ENCODE measurements at regions of chr11 and their contacts with region 1.

Region 1: DNA sequence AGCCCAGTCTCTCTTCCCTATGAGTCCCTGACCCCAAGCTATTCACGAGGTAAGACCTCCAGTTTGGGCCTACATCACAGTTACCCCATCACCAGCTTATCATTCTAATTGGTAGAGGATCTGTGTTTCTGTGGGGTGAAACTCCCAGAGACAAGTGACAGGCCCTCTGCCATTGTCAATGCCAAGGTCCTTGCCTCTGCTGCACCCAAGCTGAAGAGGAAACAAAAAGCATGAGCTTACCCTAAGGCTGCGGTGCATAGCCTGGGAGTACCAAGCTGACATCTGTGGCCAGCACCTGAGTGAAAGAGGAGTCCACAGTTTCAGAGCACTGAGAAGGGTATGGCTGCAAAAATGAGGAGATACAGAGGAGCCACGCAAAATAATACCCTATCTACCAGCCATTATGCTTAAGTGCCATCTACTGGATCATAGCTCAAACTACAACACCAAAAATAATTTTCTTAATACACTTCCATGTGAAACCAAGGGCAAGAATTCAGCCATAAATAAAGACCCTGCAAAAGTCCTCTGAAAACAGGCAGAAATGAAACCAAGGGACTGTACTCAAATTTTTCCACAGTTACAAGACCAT is 62.3 kb upstream of the ANO5 start:
- DNase-seq: no peak
- ATAC-seq: peak; percentile 88
- H3K4me3 Mint-ChIP-seq: no peak overlapping the region
- H3K27ac Mint-ChIP-seq: no peak overlapping the region
- H3K4me1 Mint-ChIP-seq: no peaks in the 10 kb centered on the region; the same call in 1 of the 2 replicates
- H3K27me3 Mint-ChIP-seq: peaks cover 8% of the 10 kb centered on the region
- CTCF ChIP-seq: peak; percentile 15; the same call in 1 of the 2 replicates

Region 2: DNA sequence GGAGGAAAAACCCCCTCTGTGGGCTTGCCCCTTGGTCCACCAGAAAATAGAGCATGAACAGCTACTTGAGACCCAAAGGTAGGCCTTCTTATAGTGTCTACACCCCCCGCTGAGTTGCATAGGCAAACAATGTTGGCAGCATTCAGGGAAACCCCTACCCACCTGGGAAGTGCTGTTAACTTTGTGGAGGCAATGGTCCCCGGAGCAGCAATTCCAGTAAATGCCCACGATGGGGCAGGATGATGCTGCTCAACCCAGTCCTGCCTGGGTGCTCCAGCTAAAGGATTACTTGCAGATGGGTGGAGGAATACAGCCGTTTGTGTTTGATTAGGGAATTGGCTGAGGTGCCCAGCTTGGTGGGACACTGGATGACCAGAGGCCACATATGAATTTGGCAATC is 319.0 kb before region 1 on chr11:
- CTCF ChIA-PET with region 1: interaction called, 10 read pairs
- POLR2A ChIA-PET with region 1: no interaction called
- DNase-seq: peak; percentile 59
- ATAC-seq: peak; percentile 97
- H3K4me3 Mint-ChIP-seq: no peak overlapping the region
- H3K27ac Mint-ChIP-seq: no peak overlapping the region
- H3K4me1 Mint-ChIP-seq: peaks cover 18% of the 10 kb centered on the region
- H3K27me3 Mint-ChIP-seq: no peaks in the 10 kb centered on the region
- CTCF ChIP-seq: 0 out of 2 replicates have a peak, but pooled peaks have one; percentile 20

Region 3: DNA sequence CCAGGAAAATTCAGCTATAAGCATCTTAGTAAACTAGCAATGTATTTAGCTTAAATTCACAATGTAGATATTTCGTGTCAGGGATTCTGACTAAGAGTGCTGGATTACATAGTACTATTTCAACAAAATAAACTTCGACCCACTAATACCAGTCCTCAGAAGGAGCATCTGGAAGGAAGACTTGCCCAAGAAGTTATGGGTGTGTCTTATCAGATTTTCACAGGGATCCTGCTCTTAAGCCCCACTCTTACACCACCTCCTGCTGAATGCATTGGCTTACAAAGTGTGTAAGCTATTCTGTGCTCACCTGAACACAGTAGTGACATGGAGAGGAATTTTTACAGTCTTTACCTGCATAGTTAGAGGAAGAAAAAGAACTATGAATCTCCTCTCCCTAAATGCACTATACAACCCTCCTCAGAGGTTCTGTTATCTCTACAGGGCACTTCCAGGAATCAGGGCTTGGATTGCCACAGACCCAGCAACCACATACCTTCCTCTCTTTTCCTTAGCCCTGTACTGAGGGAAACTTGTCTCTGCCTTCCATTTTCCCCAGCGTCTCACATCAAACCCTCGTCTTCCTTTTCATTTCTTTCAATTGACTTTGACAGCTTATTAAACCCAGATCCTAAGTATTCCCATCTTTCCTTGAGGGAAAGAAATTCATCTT is 27.1 kb after region 1 on chr11:
- CTCF ChIA-PET with region 1: interaction called, 11 read pairs
- POLR2A ChIA-PET with region 1: no interaction called
- DNase-seq: no peak
- ATAC-seq: no peak; the same call in 1 of the 2 replicates
- H3K4me3 Mint-ChIP-seq: no peak overlapping the region
- H3K27ac Mint-ChIP-seq: no peak overlapping the region
- H3K4me1 Mint-ChIP-seq: no peaks in the 10 kb centered on the region
- H3K27me3 Mint-ChIP-seq: peaks cover 2% of the 10 kb centered on the region; the same call in 1 of the 2 replicates
- CTCF ChIP-seq: no peak

Region 4: GRCh38 chr11:22192642-22193347 is 62.2 kb after region 1 on chr11 and contains the start of gene ANO5:
- CTCF ChIA-PET with region 1: no interaction called
- POLR2A ChIA-PET with region 1: no interaction called
- DNase-seq: peak; percentile 82
- ATAC-seq: peak; percentile 86
- H3K4me3 Mint-ChIP-seq: peak within 1 kb of the TSS; percentile 97
- H3K27ac Mint-ChIP-seq: peak within 1 kb of the TSS; percentile 90
- H3K4me1 Mint-ChIP-seq: peaks cover 44% of the 10 kb centered on the region
- H3K27me3 Mint-ChIP-seq: no peaks in the 10 kb centered on the region
- CTCF ChIP-seq: no peak
- total RNA-seq, gene ANO5: 6.3 to 6.9 TPM (median 6.7 TPM) in 3 replicates

Measured in WTC11 (cell line).